MCF 10A (cell line): ENCODE measurements at regions of chr3 and their contacts with region 1.

Region 1: DNA sequence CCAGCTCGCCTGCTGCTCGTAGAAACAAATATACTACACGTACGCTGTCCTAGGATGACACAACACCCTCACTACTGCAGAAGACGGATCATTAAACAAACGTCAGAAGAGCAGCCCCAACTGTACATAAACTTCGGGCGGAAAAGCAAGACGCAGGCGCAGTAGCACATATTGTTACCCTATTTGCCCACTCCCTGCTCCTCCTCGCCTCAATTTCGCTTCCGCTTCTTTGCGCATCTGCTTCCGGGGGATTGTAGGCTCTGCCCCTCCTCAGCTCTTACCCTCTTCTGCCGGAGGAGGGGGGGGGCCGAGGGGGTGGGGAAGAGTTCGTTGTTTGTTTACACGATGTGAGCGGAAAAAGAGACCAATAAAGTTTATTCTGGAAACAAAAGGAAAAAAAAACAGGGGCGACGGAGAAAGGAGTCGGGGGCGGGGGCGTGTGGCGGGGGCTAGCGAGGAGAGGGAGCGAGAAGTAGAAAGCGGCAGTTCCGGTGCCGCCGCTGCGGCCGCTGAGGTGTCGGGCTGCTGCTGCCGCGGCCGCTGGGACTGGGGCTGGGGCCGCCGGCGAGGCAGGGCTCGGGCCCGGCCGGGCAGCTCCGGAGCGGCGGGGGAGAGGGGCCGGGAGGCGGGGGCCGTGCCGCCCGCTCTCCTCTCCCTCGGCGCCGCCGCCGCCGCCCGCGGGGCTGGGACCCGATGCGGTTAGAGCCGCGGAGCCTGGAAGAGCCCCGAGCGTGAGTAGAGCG is at the start of gene PIK3CA:
- DNase-seq: peak; percentile 99
- H3K4me3 Mint-ChIP-seq: no peak within 1 kb of the TSS
- H3K27ac Mint-ChIP-seq: no peak within 1 kb of the TSS
- H3K4me1 Mint-ChIP-seq: peaks cover 23% of the 10 kb centered on the region
- H3K27me3 Mint-ChIP-seq: no peaks in the 10 kb centered on the region
- CTCF ChIP-seq: no peak
- total RNA-seq, gene PIK3CA: 18.1 and 20.7 TPM in 2 replicates

Region 2: GRCh38 chr3:179071550-179072397 is 76.3 kb before region 1 on chr3 and contains the start of gene ZMAT3:
- CTCF ChIA-PET with region 1: interaction called, 4 read pairs
- POLR2A ChIA-PET with region 1: interaction called, 67 read pairs
- intact Hi-C with region 1: loop called (anchors 2 kb)
- DNase-seq: peak; percentile 79
- H3K4me3 Mint-ChIP-seq: peak within 1 kb of the TSS; percentile 93
- H3K27ac Mint-ChIP-seq: peak within 1 kb of the TSS; percentile 90
- H3K4me1 Mint-ChIP-seq: peaks cover 20% of the 10 kb centered on the region
- H3K27me3 Mint-ChIP-seq: no peaks in the 10 kb centered on the region
- CTCF ChIP-seq: no peak
- total RNA-seq, gene ZMAT3: 50.9 and 58.0 TPM in 2 replicates

Region 3: GRCh38 chr3:179133575-179133974 is 14.5 kb before region 1 on chr3:
- CTCF ChIA-PET with region 1: interaction called, 24 read pairs
- POLR2A ChIA-PET with region 1: interaction called, 29 read pairs
- intact Hi-C with region 1: loop called (anchors 1 kb)
- DNase-seq: no peak
- H3K4me3 Mint-ChIP-seq: no peak overlapping the region
- H3K27ac Mint-ChIP-seq: no peak overlapping the region
- H3K4me1 Mint-ChIP-seq: no peaks in the 10 kb centered on the region
- H3K27me3 Mint-ChIP-seq: no peaks in the 10 kb centered on the region
- CTCF ChIP-seq: no peak

Region 4: DNA sequence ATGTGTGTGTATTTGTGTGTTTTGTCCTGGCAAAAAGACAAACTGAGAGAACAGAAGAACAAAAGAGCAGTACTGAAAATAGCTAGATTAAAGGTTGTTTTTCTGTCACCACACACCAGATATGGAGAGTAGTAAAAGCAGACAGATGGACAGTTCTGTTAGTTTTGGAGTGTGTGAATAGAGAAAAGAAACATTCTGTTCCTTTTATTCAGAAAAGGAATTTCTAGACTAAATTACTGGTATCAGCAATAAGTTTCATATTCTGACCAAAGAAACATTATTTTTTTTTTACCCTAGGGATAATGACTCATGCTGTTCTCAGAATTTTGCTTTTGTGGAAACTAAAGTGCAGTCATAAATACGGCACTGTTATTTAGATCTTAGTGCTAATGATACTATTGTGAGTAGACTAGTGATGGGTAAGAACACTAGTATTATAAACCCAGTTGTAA is 33.0 kb after region 1 on chr3:
- CTCF ChIA-PET with region 1: interaction called, 6 read pairs
- POLR2A ChIA-PET with region 1: interaction called, 67 read pairs
- intact Hi-C with region 1: no loop called
- DNase-seq: peak; percentile 31
- H3K4me3 Mint-ChIP-seq: no peak overlapping the region
- H3K27ac Mint-ChIP-seq: no peak overlapping the region
- H3K4me1 Mint-ChIP-seq: peaks cover 24% of the 10 kb centered on the region
- H3K27me3 Mint-ChIP-seq: no peaks in the 10 kb centered on the region
- CTCF ChIP-seq: no peak

Region 5: GRCh38 chr3:179322286-179323196 is 174.5 kb after region 1 on chr3 and contains the start of gene ZNF639:
- CTCF ChIA-PET with region 1: interaction called, 23 read pairs
- POLR2A ChIA-PET with region 1: interaction called, 50 read pairs
- intact Hi-C with region 1: no loop called
- DNase-seq: peak; percentile 72
- H3K4me3 Mint-ChIP-seq: peak within 1 kb of the TSS; percentile 81
- H3K27ac Mint-ChIP-seq: peak within 1 kb of the TSS; percentile 90
- H3K4me1 Mint-ChIP-seq: peaks cover 20% of the 10 kb centered on the region
- H3K27me3 Mint-ChIP-seq: no peaks in the 10 kb centered on the region
- CTCF ChIP-seq: peak; percentile 68
- total RNA-seq, gene ZNF639: 35.5 and 52.8 TPM in 2 replicates